Activated T-helper 1 cell treated with anti-CD3 and anti-CD28 coated beads, Interleukin-12 subunit alpha, Interleukin-12 subunit beta, Interleukin-2, Interleukin-4 antibody, amounts not matched to agents 30 ng/mL and 10 ng/mL and 1 ng/mL, durations not matched to agents 14 hours and 24 hours and 36 hours (primary cell): ENCODE measurements at regions of chr5 and their contacts with region 1.

Region 1: DNA sequence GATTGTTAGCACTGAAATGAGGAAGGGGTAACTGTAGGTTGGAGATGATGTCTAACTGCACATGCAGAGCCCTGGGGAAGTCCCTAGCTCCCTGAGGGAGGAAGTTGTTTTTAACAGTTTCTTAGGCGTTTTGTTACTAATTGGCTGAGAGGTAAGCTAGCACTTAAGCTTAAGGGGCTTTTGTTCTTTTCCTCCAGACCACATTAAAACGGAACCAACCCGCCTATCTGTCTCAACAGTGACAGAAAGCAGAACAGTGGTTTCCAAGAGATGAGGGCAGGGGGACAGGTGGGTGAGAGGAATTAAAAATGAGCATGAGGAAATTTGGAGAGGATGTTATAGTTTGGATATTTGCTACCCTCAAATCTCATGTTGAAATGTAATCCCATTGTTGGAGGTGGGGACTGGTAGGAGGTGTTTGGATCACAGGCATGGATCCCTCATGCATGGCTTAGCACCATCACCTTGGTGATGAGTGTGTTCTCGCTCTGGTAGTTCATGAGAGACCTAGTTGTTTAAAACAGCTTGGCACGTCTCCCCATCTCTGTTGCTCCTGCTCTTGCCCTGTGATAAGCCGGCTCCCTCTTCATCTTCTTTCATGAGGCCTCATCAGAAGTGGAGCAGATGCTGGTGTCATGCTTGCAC is 38.9 kb downstream of the LYRM7 start:
- DNase-seq: peak; percentile 58
- H3K4me3 Mint-ChIP-seq: peak overlapping the region; percentile 83
- H3K27ac Mint-ChIP-seq: peak overlapping the region; percentile 99
- H3K4me1 Mint-ChIP-seq: peaks cover 65% of the 10 kb centered on the region
- H3K27me3 Mint-ChIP-seq: no peaks in the 10 kb centered on the region

Region 2: DNA sequence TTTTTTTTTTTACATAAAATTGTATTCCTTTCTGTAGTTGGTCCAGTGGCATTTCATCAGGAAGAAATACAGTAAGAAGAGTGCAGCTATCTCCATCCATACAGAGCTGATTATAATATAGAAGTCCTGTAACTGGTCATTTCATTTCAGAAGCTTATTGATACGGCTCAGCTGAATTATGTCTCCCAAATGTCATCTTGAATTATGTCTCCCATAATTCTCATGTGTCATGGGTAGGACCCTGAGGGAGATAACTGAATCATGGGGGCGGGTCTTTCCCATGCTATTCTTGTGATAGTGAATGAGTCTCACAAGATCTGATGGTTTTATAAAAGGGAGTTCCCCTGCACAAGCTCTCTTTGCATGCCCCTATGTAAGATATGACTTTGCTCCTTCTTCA is 812.5 kb before region 1 on chr5:
- intact Hi-C with region 1: no loop called
- DNase-seq: no peak
- H3K4me3 Mint-ChIP-seq: no peak overlapping the region
- H3K27ac Mint-ChIP-seq: no peak overlapping the region
- H3K4me1 Mint-ChIP-seq: no peaks in the 10 kb centered on the region
- H3K27me3 Mint-ChIP-seq: no peaks in the 10 kb centered on the region

Region 3: GRCh38 chr5:130571076-130571475 is 638.6 kb before region 1 on chr5:
- intact Hi-C with region 1: no loop called
- DNase-seq: no peak
- H3K4me3 Mint-ChIP-seq: no peak overlapping the region
- H3K27ac Mint-ChIP-seq: no peak overlapping the region
- H3K4me1 Mint-ChIP-seq: no peaks in the 10 kb centered on the region
- H3K27me3 Mint-ChIP-seq: peaks cover 2% of the 10 kb centered on the region

Region 4: DNA sequence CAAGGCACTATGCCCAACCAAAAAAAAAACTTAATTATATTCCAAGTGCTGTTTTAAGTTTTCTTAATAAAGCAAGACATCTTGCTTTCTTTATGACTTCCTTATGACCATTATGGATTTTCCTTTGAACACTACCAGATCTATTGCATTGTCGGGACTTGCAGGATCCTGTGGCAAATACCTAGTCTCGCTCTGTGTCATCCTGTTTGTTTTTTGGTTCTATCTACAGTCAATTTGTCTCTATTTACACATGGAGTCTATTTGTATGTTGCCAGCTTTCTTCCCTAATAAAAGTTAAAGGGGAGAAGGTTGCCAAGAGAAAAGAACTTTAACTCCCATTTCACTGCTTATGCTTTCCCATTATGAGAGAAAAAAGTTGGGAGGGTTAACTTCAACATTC is 49.5 kb before region 1 on chr5:
- intact Hi-C with region 1: loop called (anchors 1 kb)
- DNase-seq: no peak
- H3K4me3 Mint-ChIP-seq: no peak overlapping the region
- H3K27ac Mint-ChIP-seq: peak overlapping the region; percentile 47
- H3K4me1 Mint-ChIP-seq: peaks cover 48% of the 10 kb centered on the region
- H3K27me3 Mint-ChIP-seq: peaks cover 2% of the 10 kb centered on the region

Region 5: DNA sequence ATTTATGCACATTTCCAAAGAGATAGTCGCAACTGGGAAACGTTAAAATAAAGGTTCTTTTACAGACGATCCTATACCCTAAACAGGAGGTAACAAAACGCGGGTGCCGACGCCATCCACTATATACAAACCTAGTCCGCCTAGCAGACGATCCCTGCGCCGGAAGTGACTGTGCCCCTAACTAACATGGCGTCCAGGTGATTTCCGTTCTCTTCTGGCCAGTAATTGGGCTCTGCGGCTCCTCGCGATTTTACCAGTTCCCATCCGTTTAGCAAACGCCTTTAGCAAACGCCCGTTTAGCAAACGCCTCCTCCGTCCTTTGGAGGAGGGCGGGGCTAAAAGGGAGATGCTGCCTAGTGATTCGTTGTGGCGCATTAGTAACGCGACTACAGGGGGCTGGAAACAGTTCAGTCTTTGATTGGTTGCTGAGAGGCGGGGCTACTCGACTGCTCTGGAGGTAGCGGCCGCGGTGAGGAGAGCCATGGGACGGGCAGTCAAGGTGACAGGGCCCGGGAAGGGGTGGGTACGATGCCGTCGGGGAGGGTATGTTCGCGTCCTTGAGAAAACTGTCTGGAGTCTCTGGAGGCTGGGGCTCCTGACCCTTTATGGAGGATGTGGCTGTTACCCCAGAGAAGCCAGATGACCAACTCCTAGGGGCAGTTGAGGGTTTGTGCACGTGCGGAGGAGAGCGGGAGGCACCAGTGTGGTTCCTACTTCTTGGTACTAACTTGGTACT is 38.9 kb before region 1 on chr5 and contains the start of gene LYRM7:
- intact Hi-C with region 1: loop called (anchors 1 kb)
- DNase-seq: peak; percentile 96
- H3K4me3 Mint-ChIP-seq: peak within 1 kb of the TSS; percentile 99
- H3K27ac Mint-ChIP-seq: peak within 1 kb of the TSS; percentile 98
- H3K4me1 Mint-ChIP-seq: peaks cover 51% of the 10 kb centered on the region
- H3K27me3 Mint-ChIP-seq: no peaks in the 10 kb centered on the region
- total RNA-seq, gene LYRM7: 13.7 and 15.8 TPM in 2 replicates

Region 6: DNA sequence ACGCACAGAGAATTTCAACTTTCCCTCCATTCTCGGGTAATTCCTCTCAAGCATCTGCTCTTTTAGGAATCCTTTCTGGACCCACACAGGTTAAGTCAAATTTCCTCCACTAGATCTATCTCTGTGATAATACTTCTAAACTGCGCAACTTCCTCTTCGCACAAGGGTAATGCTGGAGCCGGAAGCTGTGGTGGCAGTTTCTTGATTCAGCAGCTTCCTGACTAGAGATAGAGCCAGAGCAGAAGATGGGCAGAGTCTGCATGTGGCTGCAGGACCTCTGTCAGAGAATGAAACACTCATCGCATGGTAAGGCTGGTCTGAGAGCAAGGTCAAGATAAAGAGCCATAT is 43.2 kb after region 1 on chr5:
- intact Hi-C with region 1: loop called (anchors 1 kb)
- DNase-seq: peak; percentile 78
- H3K4me3 Mint-ChIP-seq: peak overlapping the region; percentile 89
- H3K27ac Mint-ChIP-seq: peak overlapping the region; percentile 99
- H3K4me1 Mint-ChIP-seq: peaks cover 69% of the 10 kb centered on the region
- H3K27me3 Mint-ChIP-seq: no peaks in the 10 kb centered on the region

Region 7: GRCh38 chr5:131281133-131281867 is 71.7 kb after region 1 on chr5:
- intact Hi-C with region 1: loop called (anchors 1 kb)
- DNase-seq: no peak
- H3K4me3 Mint-ChIP-seq: peak overlapping the region; percentile 86
- H3K27ac Mint-ChIP-seq: peak overlapping the region; percentile 91
- H3K4me1 Mint-ChIP-seq: peaks cover 78% of the 10 kb centered on the region
- H3K27me3 Mint-ChIP-seq: peaks cover 5% of the 10 kb centered on the region

Region 8: GRCh38 chr5:131394128-131394527 is 184.5 kb after region 1 on chr5:
- intact Hi-C with region 1: loop called (anchors 5 kb)
- DNase-seq: peak; percentile 56
- H3K4me3 Mint-ChIP-seq: peak overlapping the region; percentile 81
- H3K27ac Mint-ChIP-seq: peak overlapping the region; percentile 95
- H3K4me1 Mint-ChIP-seq: peaks cover 84% of the 10 kb centered on the region
- H3K27me3 Mint-ChIP-seq: no peaks in the 10 kb centered on the region

Region 9: DNA sequence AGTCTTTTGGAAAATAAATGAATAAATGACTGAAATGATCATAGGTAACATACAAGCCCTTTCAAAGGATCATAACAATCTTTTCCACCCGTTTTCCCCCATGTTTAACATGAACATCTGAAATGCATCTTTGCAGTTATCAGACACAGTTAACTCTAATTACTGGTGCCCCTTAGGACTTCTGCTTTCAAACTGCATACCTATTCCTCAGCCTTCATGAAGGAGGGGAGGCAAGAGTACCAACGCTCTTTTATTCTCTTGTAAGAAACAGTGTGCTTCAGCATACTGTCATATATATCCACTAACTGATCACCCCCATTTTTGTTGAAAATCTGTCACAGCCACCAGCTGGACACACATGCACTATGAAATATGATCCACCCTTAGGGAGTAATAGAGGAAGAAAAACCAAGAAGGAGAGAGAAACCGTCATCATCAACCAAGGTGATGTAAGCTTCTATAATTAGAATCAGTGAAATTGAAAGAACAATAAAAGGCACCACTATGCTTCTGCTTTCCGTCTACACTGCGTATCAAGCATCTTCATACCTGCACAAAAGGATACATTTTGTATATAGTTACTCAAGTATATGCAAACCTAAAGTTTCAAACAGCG is 326.7 kb after region 1 on chr5:
- intact Hi-C with region 1: no loop called
- DNase-seq: no peak
- H3K4me3 Mint-ChIP-seq: peak overlapping the region; percentile 46
- H3K27ac Mint-ChIP-seq: peak overlapping the region; percentile 64
- H3K4me1 Mint-ChIP-seq: peaks cover 81% of the 10 kb centered on the region
- H3K27me3 Mint-ChIP-seq: no peaks in the 10 kb centered on the region